MCF 10A (cell line): ENCODE measurements at regions of chr5 and their contacts with region 1.

Region 1: GRCh38 chr5:170100066-170100943 is 5.4 kb upstream of the FOXI1 start:
- DNase-seq: peak; percentile 87
- H3K4me3 Mint-ChIP-seq: no peak overlapping the region
- H3K27ac Mint-ChIP-seq: no peak overlapping the region
- H3K4me1 Mint-ChIP-seq: peaks cover 3% of the 10 kb centered on the region
- H3K27me3 Mint-ChIP-seq: no peaks in the 10 kb centered on the region
- CTCF ChIP-seq: peak; percentile 81

Region 2: GRCh38 chr5:169701910-169702451 is 398.3 kb before region 1 on chr5:
- CTCF ChIA-PET with region 1: interaction called, 22 read pairs
- POLR2A ChIA-PET with region 1: no interaction called
- intact Hi-C with region 1: loop called (anchors 1 kb)
- DNase-seq: peak; percentile 56
- H3K4me3 Mint-ChIP-seq: no peak overlapping the region
- H3K27ac Mint-ChIP-seq: no peak overlapping the region
- H3K4me1 Mint-ChIP-seq: peaks cover 33% of the 10 kb centered on the region
- H3K27me3 Mint-ChIP-seq: no peaks in the 10 kb centered on the region
- CTCF ChIP-seq: peak; percentile 82

Region 3: GRCh38 chr5:170080217-170080616 is 20.1 kb before region 1 on chr5:
- CTCF ChIA-PET with region 1: interaction called, 21 read pairs
- POLR2A ChIA-PET with region 1: no interaction called
- intact Hi-C with region 1: no loop called
- DNase-seq: no peak
- H3K4me3 Mint-ChIP-seq: no peak overlapping the region
- H3K27ac Mint-ChIP-seq: no peak overlapping the region
- H3K4me1 Mint-ChIP-seq: no peaks in the 10 kb centered on the region
- H3K27me3 Mint-ChIP-seq: no peaks in the 10 kb centered on the region
- CTCF ChIP-seq: no peak

Region 4: DNA sequence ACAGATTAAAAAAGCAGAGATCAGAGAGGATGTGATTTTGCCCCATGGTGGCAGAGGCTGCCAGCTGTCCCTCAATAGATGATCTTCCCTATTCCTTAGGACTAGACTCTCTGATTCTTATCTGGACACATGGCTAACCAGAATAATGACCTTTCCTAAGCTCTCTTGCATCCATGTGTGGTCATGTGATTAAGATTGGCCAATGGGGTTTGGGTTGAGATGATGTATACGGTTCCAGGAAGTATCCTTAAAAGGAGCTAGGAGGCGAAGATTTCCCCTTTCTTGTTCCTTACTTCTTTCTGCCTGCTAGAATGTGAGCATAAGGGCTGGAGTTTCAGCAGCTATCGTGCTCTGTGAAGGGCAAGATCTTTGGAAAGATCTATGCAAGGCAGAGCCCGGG is 45.2 kb after region 1 on chr5:
- CTCF ChIA-PET with region 1: interaction called, 10 read pairs
- POLR2A ChIA-PET with region 1: no interaction called
- intact Hi-C with region 1: no loop called
- DNase-seq: no peak
- H3K4me3 Mint-ChIP-seq: no peak overlapping the region
- H3K27ac Mint-ChIP-seq: no peak overlapping the region
- H3K4me1 Mint-ChIP-seq: no peaks in the 10 kb centered on the region
- H3K27me3 Mint-ChIP-seq: no peaks in the 10 kb centered on the region
- CTCF ChIP-seq: no peak

Region 5: GRCh38 chr5:170183816-170184687 is 83.7 kb after region 1 on chr5:
- CTCF ChIA-PET with region 1: interaction called, 633 read pairs
- POLR2A ChIA-PET with region 1: interaction called, 8 read pairs
- intact Hi-C with region 1: loop called (anchors 1 kb)
- DNase-seq: peak; percentile 85
- H3K4me3 Mint-ChIP-seq: no peak overlapping the region
- H3K27ac Mint-ChIP-seq: no peak overlapping the region
- H3K4me1 Mint-ChIP-seq: no peaks in the 10 kb centered on the region
- H3K27me3 Mint-ChIP-seq: no peaks in the 10 kb centered on the region
- CTCF ChIP-seq: peak; percentile 89

Region 6: GRCh38 chr5:170216266-170216864 is 116.1 kb after region 1 on chr5:
- CTCF ChIA-PET with region 1: interaction called, 100 read pairs
- POLR2A ChIA-PET with region 1: no interaction called
- intact Hi-C with region 1: loop called (anchors 1 kb)
- DNase-seq: peak; percentile 68
- H3K4me3 Mint-ChIP-seq: no peak overlapping the region
- H3K27ac Mint-ChIP-seq: no peak overlapping the region
- H3K4me1 Mint-ChIP-seq: peaks cover 6% of the 10 kb centered on the region
- H3K27me3 Mint-ChIP-seq: no peaks in the 10 kb centered on the region
- CTCF ChIP-seq: peak; percentile 76

Region 7: GRCh38 chr5:170420780-170421412 is 320.6 kb after region 1 on chr5:
- CTCF ChIA-PET with region 1: interaction called, 31 read pairs
- POLR2A ChIA-PET with region 1: no interaction called
- intact Hi-C with region 1: loop called (anchors 1 kb)
- DNase-seq: peak; percentile 82
- H3K4me3 Mint-ChIP-seq: no peak overlapping the region
- H3K27ac Mint-ChIP-seq: no peak overlapping the region
- H3K4me1 Mint-ChIP-seq: no peaks in the 10 kb centered on the region
- H3K27me3 Mint-ChIP-seq: peaks cover 45% of the 10 kb centered on the region
- CTCF ChIP-seq: peak; percentile 78